CD4-positive, alpha-beta T cell (primary cell): ENCODE measurements at regions of chr13 and their contacts with region 1.

Region 1: GRCh38 chr13:20566898-20567874 is at the start of gene IFT88:
- DNase-seq: peak; percentile 57 to 87 (median 78)
- ATAC-seq: peak; percentile 87
- H3K4me3 ChIP-seq: peak within 1 kb of the TSS; percentile 69
- H3K4me3 Mint-ChIP-seq: peak within 1 kb of the TSS; percentile 96
- H3K27ac ChIP-seq: peak within 1 kb of the TSS; percentile 53 to 60
- H3K27ac Mint-ChIP-seq: peak within 1 kb of the TSS; percentile 82
- H3K4me1 ChIP-seq: peaks cover 15% of the 10 kb centered on the region
- H3K4me1 Mint-ChIP-seq: peaks cover 19% of the 10 kb centered on the region
- H3K27me3 ChIP-seq: no peaks in the 10 kb centered on the region
- H3K27me3 Mint-ChIP-seq: no peaks in the 10 kb centered on the region
- CTCF ChIP-seq: no peak
- total RNA-seq, gene IFT88: 9.0 to 9.5 TPM

Region 2: GRCh38 chr13:20525690-20526544 is 41.3 kb before region 1 on chr13 and contains the start of gene CRYL1:
- CTCF ChIA-PET with region 1: interaction called, 3 read pairs
- POLR2A ChIA-PET with region 1: interaction called, 5 read pairs
- intact Hi-C with region 1: loop called (anchors 2 to 5 kb)
- DNase-seq: peak; percentile 53 to 88 (median 70)
- ATAC-seq: peak; percentile 86
- H3K4me3 ChIP-seq: peak within 1 kb of the TSS; percentile 68
- H3K4me3 Mint-ChIP-seq: peak within 1 kb of the TSS; percentile 97
- H3K27ac ChIP-seq: peak within 1 kb of the TSS; percentile 59 to 66
- H3K27ac Mint-ChIP-seq: peak within 1 kb of the TSS; percentile 94
- H3K4me1 ChIP-seq: peaks cover 21% of the 10 kb centered on the region
- H3K4me1 Mint-ChIP-seq: peaks cover 28% of the 10 kb centered on the region
- H3K27me3 ChIP-seq: no peaks in the 10 kb centered on the region
- H3K27me3 Mint-ChIP-seq: peaks cover 6% of the 10 kb centered on the region
- CTCF ChIP-seq: no peak
- total RNA-seq, gene CRYL1: 7.9 to 8.0 TPM

Region 3: GRCh38 chr13:20848944-20849343 is 281.8 kb after region 1 on chr13:
- CTCF ChIA-PET with region 1: no interaction called
- POLR2A ChIA-PET with region 1: no interaction called
- intact Hi-C with region 1: no loop called
- DNase-seq: no peak
- ATAC-seq: no peak
- H3K4me3 ChIP-seq: no peak overlapping the region
- H3K4me3 Mint-ChIP-seq: no peak overlapping the region
- H3K27ac ChIP-seq: no peak overlapping the region
- H3K27ac Mint-ChIP-seq: no peak overlapping the region
- H3K4me1 ChIP-seq: no peaks in the 10 kb centered on the region
- H3K4me1 Mint-ChIP-seq: peaks cover 10% of the 10 kb centered on the region
- H3K27me3 ChIP-seq: no peaks in the 10 kb centered on the region
- H3K27me3 Mint-ChIP-seq: no peaks in the 10 kb centered on the region
- CTCF ChIP-seq: no peak